PC-9 (cell line): ENCODE measurements at regions of chr3 and their contacts with region 1.

Region 1: DNA sequence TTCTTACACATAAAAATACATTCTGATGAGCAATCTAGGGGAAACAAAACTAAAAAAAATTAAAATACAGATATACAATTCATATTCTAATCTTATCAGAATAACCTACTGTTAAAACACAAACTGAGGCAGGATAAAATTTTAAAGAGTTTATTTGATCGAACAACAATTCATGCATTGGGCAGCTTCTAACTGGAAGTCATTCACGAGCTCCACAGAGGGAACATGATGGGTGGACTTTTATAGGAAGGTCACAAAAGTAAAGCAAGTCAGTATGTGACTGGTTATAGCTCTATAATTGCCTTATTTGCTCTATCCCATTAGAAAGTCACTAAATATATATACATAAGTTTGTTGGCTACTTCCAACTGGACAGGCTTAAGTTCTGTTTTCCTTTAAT is 1057.5 kb upstream of the CFAP20DC start:
- DNase-seq: no peak
- H3K4me3 ChIP-seq: no peak overlapping the region
- H3K27ac ChIP-seq: no peak overlapping the region
- H3K4me1 ChIP-seq: no peaks in the 10 kb centered on the region
- H3K27me3 ChIP-seq: no peaks in the 10 kb centered on the region
- CTCF ChIP-seq: no peak

Region 2: GRCh38 chr3:59245859-59246501 is 861.3 kb before region 1 on chr3:
- CTCF ChIA-PET with region 1: no interaction called
- POLR2A ChIA-PET with region 1: no interaction called
- intact Hi-C with region 1: no loop called
- DNase-seq: no peak
- H3K4me3 ChIP-seq: no peak overlapping the region
- H3K27ac ChIP-seq: no peak overlapping the region
- H3K4me1 ChIP-seq: no peaks in the 10 kb centered on the region
- H3K27me3 ChIP-seq: no peaks in the 10 kb centered on the region
- CTCF ChIP-seq: no peak

Region 3: GRCh38 chr3:60792297-60792721 is 685.0 kb after region 1 on chr3:
- CTCF ChIA-PET with region 1: no interaction called
- POLR2A ChIA-PET with region 1: interaction called, 10 read pairs
- intact Hi-C with region 1: no loop called
- DNase-seq: no peak
- H3K4me3 ChIP-seq: no peak overlapping the region
- H3K27ac ChIP-seq: no peak overlapping the region
- H3K4me1 ChIP-seq: no peaks in the 10 kb centered on the region
- H3K27me3 ChIP-seq: no peaks in the 10 kb centered on the region
- CTCF ChIP-seq: no peak